ENCODE measurements at regions of chr5 and their contacts with region 1.

Region 1: DNA sequence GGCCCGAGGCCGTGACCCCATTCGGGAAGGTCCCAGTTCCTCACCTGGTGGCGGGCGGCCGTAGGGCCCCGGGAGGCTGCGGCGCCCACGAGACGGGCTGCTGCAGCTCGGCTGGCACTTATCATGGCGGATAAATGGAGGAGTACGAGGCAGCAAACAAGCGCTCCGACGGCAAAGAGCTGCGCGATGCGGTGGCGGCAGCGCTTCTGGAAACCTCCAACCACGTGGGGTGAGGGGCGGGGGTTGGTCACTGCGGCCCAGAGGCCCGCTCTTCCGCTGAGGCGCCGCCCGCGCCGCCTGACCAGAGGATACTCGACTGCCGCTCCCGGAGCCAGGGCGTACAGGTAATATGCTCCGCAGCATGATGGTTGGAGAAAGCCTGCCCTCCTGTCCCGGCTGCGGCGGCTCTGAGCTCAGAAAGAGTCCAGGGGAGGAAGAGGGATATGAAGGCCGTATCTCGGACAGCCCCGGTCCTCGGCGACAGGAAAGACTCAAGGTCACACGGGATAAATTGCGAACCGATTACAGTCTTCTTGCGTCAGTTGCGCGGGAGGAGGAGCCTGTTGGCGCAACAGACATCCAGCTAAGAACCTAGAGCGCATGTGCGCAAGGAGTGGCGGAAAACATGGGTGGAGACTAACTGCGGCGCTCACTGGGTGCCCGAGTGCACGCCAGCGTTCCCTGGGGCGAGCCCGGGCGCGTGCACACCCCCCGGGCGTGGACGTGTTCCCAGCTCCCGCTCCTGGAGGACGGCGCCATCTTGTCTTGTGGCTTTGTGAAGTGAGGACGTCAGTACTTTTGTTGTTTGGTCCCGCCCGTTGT is at the start of gene HSPA9:
- DNase-seq: peak; percentile 100
- ATAC-seq: peak; percentile 85
- H3K4me3 ChIP-seq: peak within 1 kb of the TSS; percentile 80 to 98 (median 96)
- H3K4me3 Mint-ChIP-seq: peak within 1 kb of the TSS; percentile 96
- H3K27ac ChIP-seq: peak within 1 kb of the TSS; percentile 99 to 100
- H3K27ac Mint-ChIP-seq: peak within 1 kb of the TSS; percentile 100
- H3K4me1 ChIP-seq: peaks cover 16% of the 10 kb centered on the region in 2 donors
- H3K4me1 Mint-ChIP-seq: peaks cover 30% of the 10 kb centered on the region
- H3K27me3 ChIP-seq: no peaks in the 10 kb centered on the region
- H3K27me3 Mint-ChIP-seq: no peaks in the 10 kb centered on the region
- CTCF ChIP-seq: no peak
- total RNA-seq, gene HSPA9: 139 and 142 TPM in 2 replicates

Region 2: DNA sequence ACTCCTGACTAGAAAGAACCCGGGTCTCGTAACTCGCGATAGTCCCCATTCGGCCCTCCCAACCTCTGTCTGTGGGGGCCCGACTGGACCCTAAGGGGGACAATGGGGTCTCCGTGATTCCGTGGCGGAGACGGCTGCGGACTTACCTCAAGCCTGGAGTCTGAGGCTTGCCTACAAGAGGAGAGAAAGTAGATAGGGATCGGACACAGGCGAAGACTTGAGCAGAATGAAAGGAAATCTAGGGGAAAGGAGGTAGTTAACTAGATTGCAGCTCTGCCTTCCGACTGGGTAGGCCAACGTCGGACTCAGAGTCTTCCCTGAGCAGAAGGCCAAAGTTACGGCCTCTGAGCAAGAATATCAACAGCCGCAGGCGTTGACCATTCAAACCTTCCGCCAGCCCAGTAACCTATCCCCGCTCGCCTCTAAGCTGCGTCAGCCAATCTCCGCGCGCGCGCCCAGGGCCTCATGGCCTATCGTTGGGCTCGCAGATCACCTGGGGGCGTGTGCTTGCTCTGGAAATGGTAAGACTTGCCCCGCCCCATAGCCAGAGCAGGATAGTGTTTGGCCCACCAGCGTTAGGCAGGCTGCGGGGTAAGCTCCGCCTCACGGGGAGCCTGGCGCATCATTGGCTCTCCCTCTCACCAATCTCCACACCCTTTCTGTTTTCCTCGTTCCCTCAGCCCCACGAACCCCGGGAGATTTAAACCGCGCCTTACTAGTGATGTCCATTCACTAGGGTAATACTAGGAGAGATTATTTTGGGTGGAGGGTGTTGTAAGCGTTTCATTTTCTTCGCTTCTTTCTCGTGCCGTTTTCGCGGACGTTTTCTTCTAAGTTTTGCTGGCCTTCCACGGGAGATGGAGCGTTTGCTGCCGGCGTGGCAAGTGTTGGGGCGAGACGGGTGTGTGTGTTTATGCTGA is 243.7 kb before region 1 on chr5 and contains the start of gene CDC25C:
- CTCF ChIA-PET with region 1: no interaction called
- POLR2A ChIA-PET with region 1: no interaction called
- intact Hi-C with region 1: loop called (anchors 5 kb)
- DNase-seq: peak; percentile 97
- ATAC-seq: peak; percentile 100
- H3K4me3 ChIP-seq: peak within 1 kb of the TSS; percentile 60 to 75 (median 72)
- H3K4me3 Mint-ChIP-seq: peak within 1 kb of the TSS; percentile 87
- H3K27ac ChIP-seq: peak within 1 kb of the TSS in 1 of 2 donors; percentile 23
- H3K27ac Mint-ChIP-seq: peak within 1 kb of the TSS; percentile 61
- H3K4me1 ChIP-seq: peaks cover 7 to 15% of the 10 kb centered on the region in 2 donors
- H3K4me1 Mint-ChIP-seq: peaks cover 14% of the 10 kb centered on the region
- H3K27me3 ChIP-seq: no peaks in the 10 kb centered on the region
- H3K27me3 Mint-ChIP-seq: no peaks in the 10 kb centered on the region
- CTCF ChIP-seq: no peak
- total RNA-seq, gene CDC25C: not detected in 2 replicates

Region 3: DNA sequence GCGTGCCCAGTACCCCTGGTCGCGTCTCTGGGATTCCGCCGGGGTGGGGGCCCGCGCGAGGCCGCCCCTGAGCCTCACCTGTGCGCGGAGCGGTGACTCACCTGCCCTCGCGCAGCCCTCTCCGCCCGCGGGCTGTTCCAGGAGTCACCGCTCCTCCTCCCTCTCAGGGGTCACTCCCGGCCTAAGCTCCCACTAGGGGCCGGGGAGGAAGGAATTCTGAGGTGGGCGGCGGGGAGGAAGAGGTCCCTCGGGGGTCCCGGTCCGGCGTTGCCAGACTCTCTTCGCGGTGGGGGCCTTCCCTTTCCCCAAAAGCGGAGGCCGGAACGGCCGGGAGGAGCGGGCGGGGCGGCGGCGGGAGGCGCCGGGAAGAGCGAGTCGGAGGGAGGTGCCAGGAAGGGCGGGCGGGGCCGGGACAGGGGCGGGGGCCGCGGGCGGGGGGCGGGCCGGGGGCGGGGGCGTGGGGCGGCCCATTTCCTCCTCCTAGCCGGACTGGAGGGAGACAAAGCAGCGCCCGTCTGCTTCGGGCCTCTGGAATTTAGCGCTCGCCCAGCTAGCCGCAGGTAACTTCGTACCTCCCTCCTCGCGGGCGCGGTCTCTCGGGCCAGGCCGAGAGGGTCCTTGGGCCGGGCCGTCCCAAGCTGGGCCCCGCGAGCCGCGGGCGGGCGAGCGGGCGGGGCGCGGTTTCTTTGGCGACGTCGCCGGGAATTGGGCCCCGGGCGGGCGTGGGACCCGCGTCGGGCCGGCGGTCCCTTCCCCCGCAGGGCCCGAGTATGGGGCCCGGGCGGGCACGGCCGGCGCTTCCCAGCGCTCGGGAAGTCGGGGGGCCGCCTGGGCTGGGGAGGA is 177.8 kb after region 1 on chr5 and contains the start of gene CTNNA1:
- CTCF ChIA-PET with region 1: no interaction called
- POLR2A ChIA-PET with region 1: interaction called, 5 read pairs
- intact Hi-C with region 1: loop called (anchors 5 kb)
- DNase-seq: peak; percentile 75
- ATAC-seq: peak; percentile 78
- H3K4me3 ChIP-seq: peak within 1 kb of the TSS; percentile 48 to 89 (median 74)
- H3K4me3 Mint-ChIP-seq: peak within 1 kb of the TSS; percentile 85
- H3K27ac ChIP-seq: peak within 1 kb of the TSS in 1 of 2 donors; percentile 70
- H3K27ac Mint-ChIP-seq: peak within 1 kb of the TSS; percentile 74
- H3K4me1 ChIP-seq: peaks cover 6 to 17% of the 10 kb centered on the region in 2 donors
- H3K4me1 Mint-ChIP-seq: peaks cover 28% of the 10 kb centered on the region
- H3K27me3 ChIP-seq: no peaks in the 10 kb centered on the region
- H3K27me3 Mint-ChIP-seq: no peaks in the 10 kb centered on the region
- CTCF ChIP-seq: no peak
- total RNA-seq, gene CTNNA1: 75.9 and 96.0 TPM in 2 replicates

Region 4: DNA sequence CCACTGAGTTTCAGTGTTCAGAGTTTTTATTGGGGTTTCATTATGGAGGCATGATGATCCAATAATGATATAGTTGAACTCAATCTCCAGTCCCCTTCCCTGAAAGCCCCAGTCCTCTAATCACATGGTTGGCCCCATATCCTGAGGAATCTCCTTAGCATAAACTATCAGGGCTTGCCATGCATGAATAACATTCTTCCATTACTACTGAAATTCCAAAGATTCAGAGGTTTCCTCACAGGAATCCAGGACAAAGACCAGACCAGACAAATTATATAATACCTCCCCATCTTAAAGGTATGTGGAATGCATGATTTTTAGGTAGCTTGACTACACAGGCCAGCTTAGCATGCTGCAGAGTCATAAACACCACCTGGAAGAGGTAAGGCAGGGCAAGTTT is 315.2 kb after region 1 on chr5:
- CTCF ChIA-PET with region 1: no interaction called
- POLR2A ChIA-PET with region 1: no interaction called
- intact Hi-C with region 1: no loop called
- DNase-seq: no peak
- ATAC-seq: no peak
- H3K4me3 ChIP-seq: no peak overlapping the region
- H3K4me3 Mint-ChIP-seq: no peak overlapping the region
- H3K27ac ChIP-seq: no peak overlapping the region
- H3K27ac Mint-ChIP-seq: no peak overlapping the region
- H3K4me1 ChIP-seq: no peaks in the 10 kb centered on the region
- H3K4me1 Mint-ChIP-seq: no peaks in the 10 kb centered on the region
- H3K27me3 ChIP-seq: no peaks in the 10 kb centered on the region
- H3K27me3 Mint-ChIP-seq: no peaks in the 10 kb centered on the region
- CTCF ChIP-seq: no peak

Region 5: GRCh38 chr5:139273572-139274289 is 698.3 kb after region 1 on chr5:
- CTCF ChIA-PET with region 1: no interaction called
- POLR2A ChIA-PET with region 1: interaction called, 8 read pairs
- intact Hi-C with region 1: loop called (anchors 1 kb)
- DNase-seq: peak; percentile 95
- ATAC-seq: peak; percentile 98
- H3K4me3 ChIP-seq: peak overlapping the region; percentile 61 to 86 (median 75)
- H3K4me3 Mint-ChIP-seq: peak overlapping the region; percentile 92
- H3K27ac ChIP-seq: peak overlapping the region; percentile 62 to 74
- H3K27ac Mint-ChIP-seq: peak overlapping the region; percentile 91
- H3K4me1 ChIP-seq: peaks cover 32 to 44% of the 10 kb centered on the region in 2 donors
- H3K4me1 Mint-ChIP-seq: peaks cover 46% of the 10 kb centered on the region
- H3K27me3 ChIP-seq: no peaks in the 10 kb centered on the region
- H3K27me3 Mint-ChIP-seq: no peaks in the 10 kb centered on the region
- CTCF ChIP-seq: no peak

Measured in B cell (primary cell).